ENCODE measurements at regions of chr12 and their contacts with region 1.

Region 1: DNA sequence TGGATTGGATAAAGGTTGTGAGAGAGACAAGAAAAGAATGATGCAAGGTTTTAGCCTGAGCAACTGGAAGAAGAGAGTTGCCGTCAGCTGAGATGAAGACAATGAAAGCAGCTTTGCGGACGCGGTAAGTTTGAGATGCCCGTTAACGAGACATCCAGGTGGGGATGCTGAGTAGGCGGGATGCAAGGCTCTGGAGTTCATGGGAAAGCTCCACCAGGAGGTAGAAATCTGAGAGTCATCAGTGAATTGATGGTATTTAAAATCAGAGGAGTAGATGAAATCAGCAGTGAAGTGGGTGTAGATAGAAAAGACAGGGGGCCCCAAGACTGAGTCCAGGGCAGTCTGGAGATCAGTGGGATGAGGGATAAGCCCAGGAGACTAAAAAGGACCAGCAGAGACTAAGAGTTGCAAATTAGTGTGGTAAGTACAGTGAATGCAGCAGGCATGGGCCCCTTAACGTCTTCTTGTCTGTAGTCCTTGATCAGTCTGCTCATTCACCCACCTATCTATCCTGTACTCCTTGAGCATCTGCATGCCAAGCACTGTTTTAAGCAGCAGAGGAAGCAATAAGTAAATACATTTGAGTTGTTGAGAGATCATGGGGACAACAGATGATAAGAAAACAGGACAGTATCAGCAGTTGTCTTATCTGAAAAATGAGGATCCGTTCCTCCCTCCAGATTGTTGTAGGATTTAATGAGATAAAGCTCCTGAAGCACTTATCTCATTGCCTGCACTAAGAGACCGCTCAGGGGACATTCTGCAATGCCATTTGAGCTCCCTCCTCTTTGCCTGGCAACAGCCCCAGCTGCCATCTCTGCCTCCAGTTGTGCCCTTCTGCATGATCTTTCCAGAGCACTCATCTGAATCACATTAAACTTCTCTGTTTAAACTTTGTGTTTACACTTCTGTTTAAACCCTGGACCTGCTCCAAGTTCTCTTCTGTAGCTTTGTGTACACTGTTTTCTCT is 91.5 kb downstream of the APAF1 start:
- DNase-seq: peak; percentile 51
- ATAC-seq: peak; percentile 63
- H3K4me3 ChIP-seq: no peak overlapping the region
- H3K27ac ChIP-seq: no peak overlapping the region
- H3K4me1 ChIP-seq: peaks cover 31% of the 10 kb centered on the region
- H3K27me3 ChIP-seq: no peaks in the 10 kb centered on the region
- CTCF ChIP-seq: no peak

Region 2: DNA sequence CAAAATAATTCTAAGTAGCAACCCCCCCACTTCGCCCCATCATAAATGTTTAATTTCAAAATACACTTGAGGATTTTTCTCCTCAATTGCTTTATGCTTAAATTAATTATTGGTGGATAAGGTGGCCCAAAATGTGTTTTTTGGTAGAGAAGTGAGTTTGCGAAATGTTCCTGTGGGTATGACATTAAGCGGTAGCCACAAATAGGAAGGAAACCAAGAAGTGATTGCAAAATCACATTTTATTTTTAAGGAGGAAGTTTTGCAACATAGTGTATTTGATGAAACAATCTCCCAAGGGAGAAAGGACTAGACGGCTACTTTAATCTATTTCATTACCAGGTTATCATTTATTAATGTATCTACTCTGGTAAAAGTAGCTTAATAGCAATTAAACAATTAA is 117.7 kb before region 1 on chr12:
- CTCF ChIA-PET with region 1: no interaction called
- POLR2A ChIA-PET with region 1: interaction called, 23 read pairs
- intact Hi-C with region 1: no loop called
- DNase-seq: no peak
- ATAC-seq: no peak
- H3K4me3 ChIP-seq: no peak overlapping the region
- H3K27ac ChIP-seq: no peak overlapping the region
- H3K4me1 ChIP-seq: no peaks in the 10 kb centered on the region
- H3K27me3 ChIP-seq: no peaks in the 10 kb centered on the region
- CTCF ChIP-seq: no peak

Region 3: DNA sequence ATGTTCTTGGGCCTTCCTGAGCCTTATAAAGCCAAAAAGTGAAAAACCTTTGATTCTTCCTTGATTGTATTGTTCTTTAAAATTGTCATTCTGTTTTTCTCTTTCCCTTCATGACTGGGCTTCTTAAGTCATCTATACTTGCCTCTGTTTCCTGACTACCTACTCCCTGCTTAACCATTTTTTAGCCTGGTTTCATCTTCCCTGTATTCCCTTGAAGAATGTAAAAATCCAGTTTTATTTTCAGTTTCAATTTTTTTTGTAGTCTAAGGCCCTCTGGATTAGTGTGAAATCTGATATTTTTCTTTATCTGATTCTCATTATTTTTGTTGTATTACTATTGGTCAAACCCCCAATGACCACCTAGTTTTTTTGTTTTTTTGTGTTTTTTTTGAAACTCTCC is 45.3 kb before region 1 on chr12:
- CTCF ChIA-PET with region 1: no interaction called
- POLR2A ChIA-PET with region 1: no interaction called
- intact Hi-C with region 1: no loop called
- DNase-seq: no peak
- ATAC-seq: no peak
- H3K4me3 ChIP-seq: no peak overlapping the region
- H3K27ac ChIP-seq: no peak overlapping the region
- H3K4me1 ChIP-seq: no peaks in the 10 kb centered on the region
- H3K27me3 ChIP-seq: no peaks in the 10 kb centered on the region
- CTCF ChIP-seq: no peak

Measured in PC-3 (cell line).